Caco-2 (cell line): ENCODE measurements at regions of chr5 and their contacts with region 1.

Region 1: GRCh38 chr5:76771705-76772405 is 47.0 kb upstream of the F2RL1 start:
- DNase-seq: no peak
- H3K4me3 ChIP-seq: no peak overlapping the region
- H3K4me3 Mint-ChIP-seq: no peak overlapping the region
- H3K27ac Mint-ChIP-seq: no peak overlapping the region
- H3K4me1 ChIP-seq: peaks cover 7% of the 10 kb centered on the region
- H3K4me1 Mint-ChIP-seq: peaks cover 8% of the 10 kb centered on the region
- H3K27me3 ChIP-seq: no peaks in the 10 kb centered on the region
- H3K27me3 Mint-ChIP-seq: no peaks in the 10 kb centered on the region
- CTCF ChIP-seq: no peak

Region 2: GRCh38 chr5:76601470-76601869 is 170.4 kb before region 1 on chr5:
- CTCF ChIA-PET with region 1: interaction called, 47 read pairs
- POLR2A ChIA-PET with region 1: no interaction called
- intact Hi-C with region 1: loop called (anchors 1 kb)
- DNase-seq: peak in 1 of 2 experiments; percentile 62
- H3K4me3 ChIP-seq: no peak overlapping the region
- H3K4me3 Mint-ChIP-seq: no peak overlapping the region
- H3K27ac Mint-ChIP-seq: no peak overlapping the region
- H3K4me1 ChIP-seq: no peaks in the 10 kb centered on the region
- H3K4me1 Mint-ChIP-seq: peaks cover 9% of the 10 kb centered on the region
- H3K27me3 ChIP-seq: no peaks in the 10 kb centered on the region
- H3K27me3 Mint-ChIP-seq: no peaks in the 10 kb centered on the region
- CTCF ChIP-seq: peak; percentile 70 to 82

Region 3: GRCh38 chr5:76641514-76642120 is 130.2 kb before region 1 on chr5:
- CTCF ChIA-PET with region 1: interaction called, 4 read pairs
- POLR2A ChIA-PET with region 1: no interaction called
- intact Hi-C with region 1: loop called (anchors 1 kb)
- DNase-seq: peak; percentile 51 to 75
- H3K4me3 ChIP-seq: no peak overlapping the region
- H3K4me3 Mint-ChIP-seq: no peak overlapping the region
- H3K27ac Mint-ChIP-seq: no peak overlapping the region
- H3K4me1 ChIP-seq: no peaks in the 10 kb centered on the region
- H3K4me1 Mint-ChIP-seq: peaks cover 4% of the 10 kb centered on the region
- H3K27me3 ChIP-seq: no peaks in the 10 kb centered on the region
- H3K27me3 Mint-ChIP-seq: no peaks in the 10 kb centered on the region
- CTCF ChIP-seq: peak; percentile 70 to 86

Region 4: DNA sequence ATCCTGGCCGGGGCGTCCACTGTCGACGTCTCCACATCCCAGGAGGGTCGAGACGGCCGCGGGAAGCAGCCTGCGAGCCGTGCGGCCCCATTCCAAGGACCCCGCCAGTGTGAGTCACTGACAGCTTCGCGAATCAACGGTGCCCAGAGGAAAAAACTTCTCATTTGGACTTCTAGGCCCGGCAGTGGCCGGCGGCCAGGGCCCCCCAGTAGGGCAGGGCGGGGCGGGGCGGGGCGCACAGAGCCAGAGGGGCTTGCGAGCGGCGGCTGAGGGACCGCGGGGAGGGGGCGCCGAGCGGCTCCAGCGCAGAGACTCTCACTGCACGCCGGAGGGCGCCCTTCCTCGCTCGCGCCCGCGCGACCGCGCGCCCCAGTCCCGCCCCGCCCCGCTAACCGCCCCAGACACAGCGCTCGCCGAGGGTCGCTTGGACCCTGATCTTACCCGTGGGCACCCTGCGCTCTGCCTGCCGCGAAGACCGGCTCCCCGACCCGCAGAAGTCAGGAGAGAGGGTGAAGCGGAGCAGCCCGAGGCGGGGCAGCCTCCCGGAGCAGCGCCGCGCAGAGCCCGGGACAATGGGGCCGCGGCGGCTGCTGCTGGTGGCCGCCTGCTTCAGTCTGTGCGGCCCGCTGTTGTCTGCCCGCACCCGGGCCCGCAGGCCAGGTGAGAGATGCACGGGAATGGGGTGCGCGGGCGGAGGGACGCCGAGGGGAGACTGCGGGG is 56.0 kb before region 1 on chr5 and contains the start of gene F2R:
- CTCF ChIA-PET with region 1: interaction called, 4 read pairs
- POLR2A ChIA-PET with region 1: no interaction called
- intact Hi-C with region 1: loop called (anchors 1 kb)
- DNase-seq: peak; percentile 48 to 66
- H3K4me3 ChIP-seq: peak within 1 kb of the TSS; percentile 94
- H3K4me3 Mint-ChIP-seq: peak within 1 kb of the TSS; percentile 89
- H3K27ac Mint-ChIP-seq: peak within 1 kb of the TSS; percentile 55
- H3K4me1 ChIP-seq: peaks cover 9% of the 10 kb centered on the region; the same call in 1 of the 2 replicates
- H3K4me1 Mint-ChIP-seq: peaks cover 7% of the 10 kb centered on the region
- H3K27me3 ChIP-seq: no peaks in the 10 kb centered on the region
- H3K27me3 Mint-ChIP-seq: no peaks in the 10 kb centered on the region
- CTCF ChIP-seq: peak; percentile 44 to 71
- total RNA-seq, gene F2R: 6.3 and 7.8 TPM in 2 replicates

Region 5: GRCh38 chr5:76754668-76755078 is 17.2 kb before region 1 on chr5:
- CTCF ChIA-PET with region 1: interaction called, 7 read pairs
- POLR2A ChIA-PET with region 1: no interaction called
- intact Hi-C with region 1: loop called (anchors 1 kb)
- DNase-seq: no peak
- H3K4me3 ChIP-seq: no peak overlapping the region
- H3K4me3 Mint-ChIP-seq: no peak overlapping the region
- H3K27ac Mint-ChIP-seq: no peak overlapping the region
- H3K4me1 ChIP-seq: peaks cover 27% of the 10 kb centered on the region
- H3K4me1 Mint-ChIP-seq: peaks cover 14% of the 10 kb centered on the region
- H3K27me3 ChIP-seq: no peaks in the 10 kb centered on the region
- H3K27me3 Mint-ChIP-seq: no peaks in the 10 kb centered on the region
- CTCF ChIP-seq: no peak

Region 6: GRCh38 chr5:76790632-76791290 is 18.9 kb after region 1 on chr5:
- CTCF ChIA-PET with region 1: interaction called, 10 read pairs
- POLR2A ChIA-PET with region 1: no interaction called
- intact Hi-C with region 1: no loop called
- DNase-seq: peak in 1 of 2 experiments; percentile 20
- H3K4me3 ChIP-seq: no peak overlapping the region
- H3K4me3 Mint-ChIP-seq: no peak overlapping the region
- H3K27ac Mint-ChIP-seq: peak overlapping the region; percentile 53
- H3K4me1 ChIP-seq: peaks cover 39% of the 10 kb centered on the region
- H3K4me1 Mint-ChIP-seq: peaks cover 35% of the 10 kb centered on the region
- H3K27me3 ChIP-seq: no peaks in the 10 kb centered on the region
- H3K27me3 Mint-ChIP-seq: no peaks in the 10 kb centered on the region
- CTCF ChIP-seq: no peak